ENCODE measurements at regions of chr13 and their contacts with region 1.

Region 1: DNA sequence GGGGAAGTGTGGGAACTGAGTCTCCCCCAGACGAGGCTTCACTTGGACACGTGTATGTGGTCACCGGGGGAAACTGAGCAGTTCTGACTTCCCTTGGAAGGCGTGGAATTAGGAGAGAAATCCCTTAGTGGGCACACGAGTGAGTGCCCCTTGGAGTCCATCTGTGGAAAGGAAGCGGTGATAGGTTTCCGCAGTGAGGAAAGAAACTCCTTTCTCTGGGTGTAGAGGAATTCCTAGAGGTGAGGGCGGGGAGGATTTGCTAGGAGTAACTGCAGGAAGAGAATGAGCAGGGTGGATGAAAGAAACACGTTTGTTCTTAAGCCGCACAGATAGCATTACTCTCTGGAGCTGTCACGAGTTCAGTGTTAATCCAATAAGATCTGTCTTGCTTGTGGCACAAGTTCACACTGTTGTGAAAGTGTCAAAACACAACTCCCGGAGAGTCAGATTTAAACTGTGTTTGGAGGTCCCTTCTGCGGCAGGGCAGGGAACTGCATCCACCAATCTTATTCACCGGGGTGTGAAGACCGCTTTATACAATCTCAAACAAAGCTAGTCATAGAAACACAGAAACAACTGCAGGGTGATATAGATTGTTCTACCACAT is 1.2 kb downstream of the KL start:
- DNase-seq: peak; percentile 35 to 62
- ATAC-seq: peak; percentile 72 to 86 (median 82)
- H3K4me3 ChIP-seq: peak overlapping the region; percentile 55 to 71 (median 64)
- H3K27ac ChIP-seq: peak overlapping the region; percentile 78 to 95 (median 91)
- H3K4me1 ChIP-seq: peaks cover 0 to 44% (median 17%) of the 10 kb centered on the region in 9 donors
- H3K27me3 ChIP-seq: peaks cover 0 to 38% (median 0%) of the 10 kb centered on the region in 7 donors
- CTCF ChIP-seq: peak; percentile 27 to 75 (median 62)

Region 2: DNA sequence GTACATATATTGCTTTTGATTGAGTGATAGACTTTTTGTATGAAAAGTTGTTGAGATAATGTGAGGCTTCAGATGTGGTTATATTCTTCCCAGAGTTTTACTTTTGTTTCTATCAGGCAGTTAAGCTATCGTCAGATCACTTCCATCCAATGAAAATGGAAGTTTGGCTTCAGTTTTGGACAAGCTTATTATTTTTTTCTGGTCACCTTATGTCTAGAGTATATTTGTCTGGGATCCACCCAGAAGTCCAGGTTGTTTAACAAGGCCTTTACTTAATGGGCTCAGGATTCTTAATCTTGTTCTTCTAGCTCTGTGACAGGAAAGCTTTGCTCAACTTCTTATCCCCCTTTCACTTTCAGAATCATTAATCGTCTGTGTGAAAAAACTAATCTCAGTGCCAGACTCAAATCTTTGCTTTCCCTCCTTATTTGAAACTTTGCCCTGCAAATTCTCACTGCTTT is 280.3 kb before region 1 on chr13:
- intact Hi-C with region 1: loop called in 1 of 10 experiments (anchors 10 kb)
- DNase-seq: no peak
- ATAC-seq: peak in 4 of 8 donors; percentile 39 to 72 (median 64)
- H3K4me3 ChIP-seq: peak overlapping the region in 9 of 10 donors; percentile 7 to 46 (median 37)
- H3K27ac ChIP-seq: peak overlapping the region in 9 of 10 donors; percentile 20 to 84 (median 72)
- H3K4me1 ChIP-seq: peaks cover 0 to 26% (median 17%) of the 10 kb centered on the region in 9 donors
- H3K27me3 ChIP-seq: no peaks in the 10 kb centered on the region
- CTCF ChIP-seq: no peak

Region 3: DNA sequence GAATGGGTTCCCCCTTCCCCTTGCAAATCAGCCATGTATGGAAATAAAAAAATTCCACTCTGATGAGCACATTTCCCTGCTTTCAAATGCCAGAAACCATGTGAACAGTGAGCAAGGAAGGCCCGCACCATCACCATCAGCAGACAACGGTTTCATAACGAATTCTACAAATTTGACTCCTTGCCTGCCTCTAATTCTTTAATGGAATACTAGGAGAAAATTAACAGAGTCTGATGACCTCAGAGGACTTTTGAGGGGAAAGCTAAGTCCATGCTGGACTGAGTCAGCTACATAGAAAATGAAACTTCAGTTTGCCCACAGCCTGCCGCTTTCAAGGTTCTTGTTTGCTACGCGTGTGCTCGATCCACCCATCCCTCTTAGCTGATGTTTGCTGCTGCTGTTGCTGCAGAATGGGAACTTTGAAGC is 47.9 kb before region 1 on chr13:
- intact Hi-C with region 1: loop called in 2 of 10 experiments (anchors 5 kb)
- DNase-seq: peak in 1 of 2 donors; percentile 29
- ATAC-seq: peak in 7 of 8 donors; percentile 78 to 88 (median 84)
- H3K4me3 ChIP-seq: peak overlapping the region in 7 of 10 donors; percentile 12 to 40 (median 33)
- H3K27ac ChIP-seq: peak overlapping the region; percentile 27 to 90 (median 78)
- H3K4me1 ChIP-seq: peaks cover 0 to 28% (median 18%) of the 10 kb centered on the region in 9 donors
- H3K27me3 ChIP-seq: no peaks in the 10 kb centered on the region
- CTCF ChIP-seq: no peak

Region 4: DNA sequence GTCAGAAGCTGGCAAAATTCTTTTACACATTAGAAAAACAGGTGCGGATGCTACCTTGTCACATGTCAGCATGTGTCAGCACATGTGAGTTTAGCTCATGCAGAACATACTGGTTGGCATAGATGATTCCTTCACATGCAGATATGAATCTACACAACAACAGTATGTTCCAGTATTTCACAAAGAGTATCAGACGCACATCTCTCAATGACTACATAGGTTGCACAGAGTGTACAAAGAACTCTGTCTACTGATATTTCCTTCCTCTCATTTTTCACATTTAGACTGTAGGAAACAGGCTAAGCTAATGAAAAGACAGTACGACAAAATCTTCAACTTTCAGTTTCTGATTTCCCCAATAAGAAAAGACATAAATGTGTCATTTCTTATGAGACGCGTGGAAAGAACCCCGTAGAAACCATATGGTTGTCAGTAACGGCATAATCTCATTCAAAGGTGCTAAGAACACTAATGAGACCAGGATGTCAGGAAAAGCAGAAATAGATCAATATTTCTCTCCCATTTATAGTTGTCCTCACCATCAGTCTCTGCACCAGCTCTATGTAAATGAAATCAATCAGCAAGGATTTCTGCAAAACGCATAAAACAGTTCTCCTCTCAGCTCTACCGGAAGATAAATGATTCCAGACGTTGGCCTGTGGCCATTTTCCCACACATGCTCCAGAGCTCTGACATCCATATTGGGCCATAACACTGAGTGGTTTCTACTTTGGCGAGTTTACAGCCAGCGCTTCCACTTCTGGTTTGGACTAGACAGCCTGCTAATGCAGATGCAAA is 186.9 kb after region 1 on chr13:
- intact Hi-C with region 1: loop called in 1 of 10 experiments (anchors 10 kb)
- DNase-seq: peak; percentile 50 to 87
- ATAC-seq: peak; percentile 73 to 89 (median 82)
- H3K4me3 ChIP-seq: peak overlapping the region in 9 of 10 donors; percentile 21 to 54 (median 44)
- H3K27ac ChIP-seq: peak overlapping the region; percentile 54 to 87 (median 80)
- H3K4me1 ChIP-seq: peaks cover 27 to 99% (median 82%) of the 10 kb centered on the region in 9 donors
- H3K27me3 ChIP-seq: no peaks in the 10 kb centered on the region
- CTCF ChIP-seq: no peak

Region 5: GRCh38 chr13:33262062-33262497 is 244.7 kb after region 1 on chr13:
- intact Hi-C with region 1: no loop called
- DNase-seq: no peak
- ATAC-seq: peak in 7 of 8 donors; percentile 34 to 68 (median 53)
- H3K4me3 ChIP-seq: no peak overlapping the region
- H3K27ac ChIP-seq: peak overlapping the region in 8 of 10 donors; percentile 32 to 76 (median 54)
- H3K4me1 ChIP-seq: peaks cover 14 to 97% (median 89%) of the 10 kb centered on the region in 9 donors
- H3K27me3 ChIP-seq: no peaks in the 10 kb centered on the region
- CTCF ChIP-seq: peak in 1 of 9 donors; percentile 14